ENCODE measurements at regions of chr10 and their contacts with region 1.

Region 1: DNA sequence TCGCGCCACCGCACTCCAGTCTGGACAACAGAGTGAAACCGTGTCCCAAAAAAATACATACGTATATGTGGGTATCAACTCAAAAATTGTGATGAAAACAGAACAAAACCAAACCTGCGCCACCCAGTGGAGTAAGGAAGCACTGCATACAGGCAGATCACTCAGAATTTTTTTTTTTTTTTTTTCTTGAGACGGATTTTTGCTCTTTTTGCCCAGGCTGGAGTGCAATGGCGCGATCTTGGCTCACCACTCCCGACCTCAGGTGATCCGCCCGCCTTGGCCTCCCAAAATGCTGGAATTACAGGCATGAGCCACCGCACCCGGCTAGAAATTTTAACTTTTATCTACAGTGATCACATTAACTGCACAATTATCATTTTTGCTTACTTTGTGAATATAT is 9.1 kb upstream of the TMEM236 start:
- DNase-seq: no peak
- ATAC-seq: peak; percentile 58
- H3K4me3 ChIP-seq: no peak overlapping the region
- H3K27ac ChIP-seq: no peak overlapping the region
- H3K4me1 ChIP-seq: no peaks in the 10 kb centered on the region
- H3K27me3 ChIP-seq: no peaks in the 10 kb centered on the region; a peak in 1 of 4 replicates
- CTCF ChIP-seq: peak; percentile 70 to 83 (median 77)
- EP300 ChIP-seq: no peak
- POLR2A ChIP-seq: no peak
- RAD21 ChIP-seq: peak; percentile 70

Region 2: GRCh38 chr10:16828114-16828568 is 914.8 kb before region 1 on chr10:
- CTCF ChIA-PET with region 1: no interaction called
- POLR2A ChIA-PET with region 1: no interaction called
- RAD21 ChIA-PET with region 1: no interaction called
- SMC1A ChIA-PET with region 1: no interaction called
- in situ Hi-C with region 1: loop called (anchors 25 kb)
- intact Hi-C with region 1: no loop called
- DNase-seq: peak; percentile 48
- ATAC-seq: peak; percentile 90
- H3K4me3 ChIP-seq: no peak overlapping the region
- H3K27ac ChIP-seq: no peak overlapping the region
- H3K4me1 ChIP-seq: no peaks in the 10 kb centered on the region
- H3K27me3 ChIP-seq: no peaks in the 10 kb centered on the region
- CTCF ChIP-seq: peak; percentile 50 to 60 (median 51); a peak in 5 of 6 replicates
- EP300 ChIP-seq: no peak
- POLR2A ChIP-seq: no peak
- RAD21 ChIP-seq: peak; percentile 67

Region 3: DNA sequence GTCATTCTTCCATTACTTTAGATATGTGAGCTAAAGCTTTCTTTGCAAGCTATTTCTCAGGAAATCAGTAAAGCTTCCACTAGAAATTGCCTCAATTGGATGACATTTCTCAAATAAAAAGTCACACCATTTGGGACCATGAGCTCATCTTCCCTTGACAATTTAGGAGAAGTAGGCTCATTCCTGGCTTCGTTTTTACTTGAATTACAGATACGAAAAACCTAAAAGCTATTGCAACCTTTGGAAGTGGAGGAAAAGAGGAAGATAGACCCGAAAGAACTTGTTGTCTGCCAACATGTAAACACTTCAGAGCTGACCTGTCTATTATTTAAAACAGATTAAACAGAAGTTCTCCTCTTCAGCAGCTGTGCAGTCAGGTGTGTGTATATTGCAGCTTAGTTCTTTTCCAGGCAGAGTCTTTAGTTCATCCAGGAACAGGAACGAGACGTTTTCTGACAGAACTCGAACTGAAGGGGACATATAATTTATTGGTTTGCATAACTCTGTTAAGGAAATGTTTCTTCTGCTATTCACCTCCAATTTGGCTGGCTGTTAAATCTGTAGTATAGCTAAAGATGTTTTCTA is 245.4 kb before region 1 on chr10:
- CTCF ChIA-PET with region 1: no interaction called
- POLR2A ChIA-PET with region 1: no interaction called
- RAD21 ChIA-PET with region 1: no interaction called
- SMC1A ChIA-PET with region 1: no interaction called
- in situ Hi-C with region 1: no loop called
- intact Hi-C with region 1: no loop called
- DNase-seq: no peak
- ATAC-seq: no peak
- H3K4me3 ChIP-seq: no peak overlapping the region
- H3K27ac ChIP-seq: no peak overlapping the region
- H3K4me1 ChIP-seq: no peaks in the 10 kb centered on the region
- H3K27me3 ChIP-seq: peaks cover 0 to 3% of the 10 kb centered on the region in 2 experiments; a peak in 1 of 4 replicates
- CTCF ChIP-seq: no peak
- EP300 ChIP-seq: no peak
- POLR2A ChIP-seq: no peak
- RAD21 ChIP-seq: no peak

Measured in GM12878 (cell line).